Activated CD4-positive, alpha-beta memory T cell treated with anti-CD3 and anti-CD28 coated beads for 36 hours (primary cell): ENCODE measurements at regions of chr9 and their contacts with region 1.

Region 1: DNA sequence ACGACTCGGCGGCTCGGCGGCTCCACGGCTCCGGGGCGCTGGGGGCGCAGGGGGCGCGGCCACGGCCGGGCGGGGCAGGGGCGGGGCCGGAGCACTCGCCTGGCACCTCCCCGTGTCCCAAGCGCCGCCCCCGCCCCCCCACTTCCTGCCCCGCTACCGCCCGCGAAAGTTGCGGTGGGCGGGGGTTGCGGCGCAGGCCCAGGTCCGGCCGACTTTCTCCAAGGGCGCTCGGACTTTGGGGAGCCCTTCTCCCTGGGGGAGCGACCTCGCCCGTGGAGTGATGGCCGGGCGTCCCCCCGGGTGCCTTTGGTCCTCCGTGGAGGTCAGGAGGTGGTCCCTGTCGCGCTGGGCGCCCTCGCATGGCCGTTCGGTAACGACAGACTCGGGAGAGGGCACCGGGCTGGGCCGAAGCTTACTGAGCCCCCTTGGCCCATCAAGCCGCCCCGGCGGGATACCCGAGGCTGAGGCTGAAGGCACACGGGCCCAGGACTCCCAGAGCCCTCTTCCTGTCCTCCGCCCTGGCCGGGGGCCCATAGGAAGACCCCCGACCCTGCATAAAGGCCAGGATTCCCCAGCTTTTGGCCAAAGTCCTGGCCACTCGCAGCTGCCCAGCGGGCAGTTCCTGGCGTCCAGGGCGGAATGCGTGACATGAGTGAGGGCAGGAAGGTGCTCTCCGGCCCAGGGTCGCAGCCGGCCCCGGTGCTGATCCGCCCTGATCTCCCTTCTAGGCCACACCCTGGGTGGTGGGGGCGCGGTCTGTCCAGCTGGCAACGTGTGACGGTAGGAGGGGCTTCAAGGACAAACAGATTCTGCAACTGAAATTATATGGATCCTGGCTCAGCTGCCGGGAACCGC is 883 bp upstream of the VAV2 start:
- DNase-seq: peak; percentile 78
- H3K4me3 Mint-ChIP-seq: peak overlapping the region; percentile 69
- H3K27ac Mint-ChIP-seq: no peak overlapping the region
- H3K4me1 Mint-ChIP-seq: peaks cover 1% of the 10 kb centered on the region
- H3K27me3 Mint-ChIP-seq: peaks cover 12% of the 10 kb centered on the region

Region 2: GRCh38 chr9:133742849-133743444 is 250.1 kb before region 1 on chr9:
- CTCF ChIA-PET with region 1: interaction called, 12 read pairs
- POLR2A ChIA-PET with region 1: no interaction called
- intact Hi-C with region 1: no loop called
- DNase-seq: peak; percentile 81
- H3K4me3 Mint-ChIP-seq: no peak overlapping the region
- H3K27ac Mint-ChIP-seq: no peak overlapping the region
- H3K4me1 Mint-ChIP-seq: peaks cover 2% of the 10 kb centered on the region
- H3K27me3 Mint-ChIP-seq: peaks cover 7% of the 10 kb centered on the region

Region 3: GRCh38 chr9:133782157-133783130 is 210.6 kb before region 1 on chr9:
- CTCF ChIA-PET with region 1: interaction called, 118 read pairs
- POLR2A ChIA-PET with region 1: interaction called, 6 read pairs
- intact Hi-C with region 1: loop called (anchors 1 kb)
- DNase-seq: peak; percentile 75
- H3K4me3 Mint-ChIP-seq: no peak overlapping the region
- H3K27ac Mint-ChIP-seq: no peak overlapping the region
- H3K4me1 Mint-ChIP-seq: no peaks in the 10 kb centered on the region
- H3K27me3 Mint-ChIP-seq: no peaks in the 10 kb centered on the region

Region 4: GRCh38 chr9:133792721-133793470 is 200.1 kb before region 1 on chr9:
- CTCF ChIA-PET with region 1: interaction called, 107 read pairs
- POLR2A ChIA-PET with region 1: no interaction called
- intact Hi-C with region 1: loop called (anchors 1 kb)
- DNase-seq: peak; percentile 61
- H3K4me3 Mint-ChIP-seq: no peak overlapping the region
- H3K27ac Mint-ChIP-seq: no peak overlapping the region
- H3K4me1 Mint-ChIP-seq: no peaks in the 10 kb centered on the region
- H3K27me3 Mint-ChIP-seq: peaks cover 7% of the 10 kb centered on the region

Region 5: DNA sequence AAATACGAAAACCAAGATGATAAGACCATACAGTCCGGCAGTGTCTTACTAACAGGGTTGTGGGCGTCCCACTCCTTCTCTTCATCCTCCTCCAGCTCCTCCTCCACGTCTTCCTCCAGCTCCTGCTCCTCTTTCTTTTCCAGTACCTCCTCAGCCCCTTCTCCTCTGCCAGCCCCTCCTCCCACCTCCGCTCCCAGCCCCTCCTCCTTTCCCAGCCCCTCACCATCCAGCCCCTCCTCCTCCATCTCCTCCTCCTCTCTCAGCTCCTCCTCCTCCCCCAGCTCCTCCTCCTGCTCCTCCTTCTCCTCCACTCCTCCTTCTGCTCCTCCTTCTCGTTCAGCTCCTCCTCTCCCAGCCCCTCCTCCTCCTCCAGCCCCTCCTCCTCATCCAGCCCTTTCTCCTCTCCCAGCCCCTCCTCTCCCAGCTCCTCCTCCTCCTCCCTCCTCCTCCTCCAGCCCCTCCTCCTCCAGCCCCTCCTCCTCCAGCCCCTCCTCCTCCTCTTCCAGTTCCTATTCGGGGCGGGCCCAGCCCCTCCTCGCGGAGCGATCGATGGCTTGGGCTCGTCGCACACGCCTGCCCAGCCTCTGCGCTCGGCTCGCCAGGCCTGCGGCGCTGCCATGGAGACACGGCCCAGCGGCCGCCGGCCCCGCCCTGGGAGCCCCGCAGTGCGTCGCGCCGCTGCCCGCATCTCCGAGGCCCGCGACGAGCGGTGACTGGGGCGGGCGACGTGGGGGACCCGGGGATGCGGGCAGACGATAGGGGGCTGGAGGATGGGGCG is 32.0 kb after region 1 on chr9 and contains the start of gene BRD3OS:
- CTCF ChIA-PET with region 1: interaction called, 20 read pairs
- POLR2A ChIA-PET with region 1: no interaction called
- intact Hi-C with region 1: no loop called
- DNase-seq: peak; percentile 94
- H3K4me3 Mint-ChIP-seq: peak within 1 kb of the TSS; percentile 76
- H3K27ac Mint-ChIP-seq: peak within 1 kb of the TSS; percentile 33
- H3K4me1 Mint-ChIP-seq: peaks cover 12% of the 10 kb centered on the region
- H3K27me3 Mint-ChIP-seq: no peaks in the 10 kb centered on the region
- total RNA-seq, gene BRD3OS: 12.6 to 13.2 TPM